AG04449 (cell line): ENCODE measurements at regions of chr3 and their contacts with region 1.

Region 1: DNA sequence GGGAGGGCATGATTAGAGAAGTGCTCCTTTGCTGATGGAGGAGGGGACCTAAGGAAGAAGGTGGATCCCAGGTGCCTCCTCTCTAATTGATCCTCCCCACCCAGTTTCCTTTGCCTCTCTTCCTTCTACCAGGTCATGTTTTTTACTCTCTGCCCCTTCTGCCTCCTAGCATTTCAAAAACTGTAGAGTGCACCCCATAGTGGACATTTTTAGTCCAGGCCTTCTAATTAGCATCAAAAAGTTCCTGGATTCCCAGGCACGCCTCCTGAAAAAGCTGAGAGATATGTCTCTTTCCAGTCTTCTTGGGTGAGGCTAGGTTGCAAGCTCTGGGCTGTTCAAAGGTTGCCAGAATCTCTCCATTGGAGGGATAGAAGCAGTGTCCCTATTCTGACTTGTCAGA is 18.7 kb upstream of the ITGB5 start:
- DNase-seq: no peak
- H3K4me3 ChIP-seq: no peak overlapping the region
- CTCF ChIP-seq: no peak

Region 2: GRCh38 chr3:124747111-124747981 is 158.5 kb before region 1 on chr3:
- CTCF ChIA-PET with region 1: interaction called, 12 read pairs
- POLR2A ChIA-PET with region 1: no interaction called
- DNase-seq: no peak
- H3K4me3 ChIP-seq: no peak overlapping the region
- CTCF ChIP-seq: no peak

Region 3: GRCh38 chr3:124780761-124781475 is 124.9 kb before region 1 on chr3:
- CTCF ChIA-PET with region 1: interaction called, 188 read pairs
- POLR2A ChIA-PET with region 1: no interaction called
- DNase-seq: no peak
- H3K4me3 ChIP-seq: 0 out of 2 replicates have a peak overlapping the region, but pooled peaks have one; percentile 3
- CTCF ChIP-seq: no peak

Region 4: DNA sequence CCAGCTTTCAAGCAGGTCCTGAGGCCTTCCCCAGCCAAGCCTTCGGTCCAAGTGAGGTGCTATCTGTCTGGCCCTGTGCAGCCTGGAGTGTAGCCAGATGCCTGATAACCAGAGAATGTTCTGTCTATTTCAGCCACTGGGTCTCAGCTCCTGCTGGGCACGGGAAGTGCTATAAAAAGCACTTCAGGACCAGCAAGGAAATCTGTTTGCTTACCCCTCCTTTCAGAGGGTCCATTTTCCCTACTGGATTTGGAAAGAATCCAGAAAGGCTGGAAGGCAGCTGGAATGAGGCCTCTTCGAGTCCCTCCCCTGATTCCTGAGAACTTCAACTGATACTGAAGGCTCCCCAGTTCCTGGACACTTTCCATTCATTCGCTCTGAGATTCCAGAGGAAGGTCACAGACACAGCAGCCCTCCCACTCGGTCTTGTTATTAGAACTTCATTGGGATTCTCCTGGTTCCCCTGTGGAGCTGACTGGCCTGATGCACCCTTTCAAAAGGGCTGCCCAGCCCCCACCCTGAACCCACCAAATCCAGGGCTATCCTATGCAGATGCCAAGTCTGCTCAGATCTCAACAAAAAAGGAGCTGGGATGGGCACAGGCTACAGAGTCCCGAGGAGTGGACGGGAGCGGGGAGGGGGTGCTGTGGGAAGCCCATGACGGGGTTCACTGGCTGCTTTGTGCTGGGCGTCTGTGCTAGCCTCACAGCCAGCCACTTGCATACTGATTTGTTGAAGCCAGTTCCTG is 105.2 kb before region 1 on chr3:
- CTCF ChIA-PET with region 1: interaction called, 10 read pairs
- POLR2A ChIA-PET with region 1: no interaction called
- DNase-seq: no peak
- H3K4me3 ChIP-seq: no peak overlapping the region
- CTCF ChIP-seq: no peak

Region 5: DNA sequence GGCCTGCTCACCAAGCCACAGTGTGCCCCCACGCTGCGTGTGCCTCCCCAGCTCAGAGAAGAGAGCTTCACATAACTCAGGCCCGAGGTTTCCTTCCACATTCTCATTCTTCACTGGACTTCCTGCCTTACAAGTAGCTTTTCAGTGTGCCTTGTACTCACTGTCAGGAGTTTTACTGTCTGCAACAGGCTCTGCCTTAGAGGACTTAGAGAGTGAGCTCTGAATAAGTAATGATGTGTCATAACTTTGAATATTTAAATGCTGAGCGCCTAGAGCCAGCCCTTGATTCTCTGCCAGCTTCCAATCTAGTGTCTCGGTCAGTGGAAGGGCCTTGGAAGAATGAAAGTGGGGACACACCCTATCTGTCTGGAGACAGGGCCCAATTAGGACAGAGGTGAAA is 60.4 kb before region 1 on chr3:
- CTCF ChIA-PET with region 1: interaction called, 13 read pairs
- POLR2A ChIA-PET with region 1: interaction called, 3 read pairs
- DNase-seq: peak; percentile 86
- H3K4me3 ChIP-seq: no peak overlapping the region
- CTCF ChIP-seq: no peak

Region 6: DNA sequence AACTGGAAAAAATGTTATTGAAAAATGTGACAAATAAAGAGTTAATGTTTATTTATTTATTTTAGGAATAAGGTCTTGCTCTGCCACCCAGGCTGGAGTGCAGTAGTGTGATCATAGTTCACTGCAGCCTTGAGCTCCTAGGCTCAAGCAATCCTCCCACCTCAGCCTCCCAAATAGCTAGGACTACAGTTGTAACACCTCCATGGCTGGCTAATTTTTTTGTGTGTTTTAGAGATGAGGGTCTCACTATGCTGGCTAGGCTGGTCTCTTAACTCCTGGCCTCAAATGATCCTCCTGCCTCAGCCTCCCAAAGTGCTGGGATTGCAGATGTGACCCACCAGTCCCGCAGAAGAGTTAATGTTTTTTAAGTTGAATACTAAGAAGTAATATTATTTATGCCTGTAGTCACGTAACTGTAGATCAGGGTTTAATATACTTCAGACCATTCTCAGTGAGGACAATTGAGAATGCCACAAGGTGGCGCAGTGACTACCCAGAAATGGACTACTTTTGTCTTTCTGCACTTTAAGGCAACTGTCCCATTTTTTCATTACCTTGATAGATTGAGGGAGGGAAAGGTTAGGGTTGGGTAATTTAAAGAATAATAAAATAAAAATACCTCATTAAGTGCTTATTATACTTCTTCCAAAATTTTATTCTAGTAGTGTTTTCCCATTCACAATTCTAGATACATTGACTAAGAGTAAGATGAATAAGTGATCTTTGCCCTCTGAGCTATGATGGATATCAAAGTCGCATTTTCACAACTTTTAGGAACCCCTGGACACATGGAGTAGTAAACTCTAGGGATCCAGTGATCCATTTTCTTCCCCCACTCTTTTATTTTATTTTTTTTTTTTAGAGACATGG is 22.7 kb after region 1 on chr3:
- CTCF ChIA-PET with region 1: interaction called, 14 read pairs
- POLR2A ChIA-PET with region 1: no interaction called
- DNase-seq: no peak
- H3K4me3 ChIP-seq: no peak overlapping the region
- CTCF ChIP-seq: peak; percentile 75